Activated B cell treated with CpG ODN at 0.5 μM for 24 hours (primary cell): ENCODE measurements at regions of chr9 and their contacts with region 1.

Region 1: DNA sequence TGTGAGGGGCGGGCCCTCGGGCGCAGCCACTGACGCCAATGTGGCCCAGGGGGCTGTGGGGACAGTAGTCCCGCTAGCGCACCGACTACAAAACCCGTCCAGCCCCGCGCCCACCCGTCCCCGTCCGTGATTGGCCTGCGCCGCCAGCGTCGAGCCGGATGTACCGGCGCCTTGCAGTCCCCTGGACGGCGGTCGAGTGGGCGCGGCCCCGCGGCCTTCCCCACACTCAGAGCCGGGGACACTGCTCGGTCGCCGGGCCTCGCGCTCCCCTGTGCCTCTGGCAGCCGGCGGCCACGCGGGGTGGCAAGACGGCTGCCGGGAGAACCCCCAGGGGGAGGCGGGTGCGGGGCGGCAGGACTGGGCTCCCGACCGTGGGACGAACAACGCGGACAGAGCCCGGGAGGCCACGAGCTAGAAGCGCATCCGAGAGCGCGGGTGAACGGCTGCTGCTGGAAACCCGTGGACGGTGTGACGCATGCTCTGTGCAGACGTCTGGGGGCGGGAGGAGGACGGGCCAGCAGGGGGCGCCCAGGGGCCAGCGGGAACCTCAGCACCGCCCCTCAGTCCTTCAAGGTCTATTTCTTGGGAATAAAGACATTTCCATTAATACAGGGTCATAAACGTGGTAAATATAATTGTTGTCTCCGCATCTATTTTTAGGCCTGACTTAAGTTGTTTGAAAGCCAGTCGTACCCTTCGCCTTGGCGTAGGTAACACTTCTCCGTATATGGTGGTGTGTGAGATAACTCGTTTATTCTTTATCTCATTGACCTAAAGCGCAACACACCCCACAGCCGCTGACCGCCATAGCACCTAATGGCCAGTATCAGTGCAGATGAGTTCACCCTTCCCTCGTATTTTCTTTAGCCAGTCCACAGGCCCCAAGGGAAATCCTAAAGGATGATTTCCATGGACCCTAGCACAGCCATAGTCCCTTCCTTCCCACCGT is 629 bp upstream of the BICD2 start:
- DNase-seq: peak; percentile 97
- ATAC-seq: peak; percentile 91
- H3K4me3 Mint-ChIP-seq: peak overlapping the region; percentile 90
- H3K27ac Mint-ChIP-seq: peak overlapping the region; percentile 95
- H3K4me1 Mint-ChIP-seq: peaks cover 63% of the 10 kb centered on the region
- H3K27me3 Mint-ChIP-seq: no peaks in the 10 kb centered on the region
- CTCF ChIP-seq: peak; percentile 71

Region 2: GRCh38 chr9:92293452-92294296 is 471.6 kb before region 1 on chr9 and contains the start of gene IARS1:
- CTCF ChIA-PET with region 1: no interaction called
- POLR2A ChIA-PET with region 1: no interaction called
- intact Hi-C with region 1: loop called (anchors 1 kb)
- DNase-seq: peak; percentile 100
- ATAC-seq: peak; percentile 90
- H3K4me3 Mint-ChIP-seq: peak within 1 kb of the TSS; percentile 98
- H3K27ac Mint-ChIP-seq: peak within 1 kb of the TSS; percentile 98
- H3K4me1 Mint-ChIP-seq: peaks cover 76% of the 10 kb centered on the region
- H3K27me3 Mint-ChIP-seq: no peaks in the 10 kb centered on the region
- CTCF ChIP-seq: no peak
- total RNA-seq, gene IARS1: 176 and 205 TPM in 2 replicates

Region 3: GRCh38 chr9:92501671-92502393 is 263.4 kb before region 1 on chr9:
- CTCF ChIA-PET with region 1: no interaction called
- POLR2A ChIA-PET with region 1: no interaction called
- intact Hi-C with region 1: no loop called
- DNase-seq: no peak
- ATAC-seq: no peak
- H3K4me3 Mint-ChIP-seq: no peak overlapping the region
- H3K27ac Mint-ChIP-seq: no peak overlapping the region
- H3K4me1 Mint-ChIP-seq: no peaks in the 10 kb centered on the region
- H3K27me3 Mint-ChIP-seq: no peaks in the 10 kb centered on the region
- CTCF ChIP-seq: no peak

Region 4: GRCh38 chr9:92716557-92716956 is 48.7 kb before region 1 on chr9:
- CTCF ChIA-PET with region 1: interaction called, 7 read pairs
- POLR2A ChIA-PET with region 1: interaction called, 3 read pairs
- intact Hi-C with region 1: loop called (anchors 1 kb)
- DNase-seq: peak; percentile 76
- ATAC-seq: peak; percentile 75
- H3K4me3 Mint-ChIP-seq: no peak overlapping the region
- H3K27ac Mint-ChIP-seq: no peak overlapping the region
- H3K4me1 Mint-ChIP-seq: peaks cover 51% of the 10 kb centered on the region
- H3K27me3 Mint-ChIP-seq: no peaks in the 10 kb centered on the region
- CTCF ChIP-seq: peak; percentile 75

Region 5: GRCh38 chr9:92798358-92798757 is 33.1 kb after region 1 on chr9:
- CTCF ChIA-PET with region 1: no interaction called
- POLR2A ChIA-PET with region 1: no interaction called
- intact Hi-C with region 1: no loop called
- DNase-seq: no peak
- ATAC-seq: no peak
- H3K4me3 Mint-ChIP-seq: no peak overlapping the region
- H3K27ac Mint-ChIP-seq: no peak overlapping the region
- H3K4me1 Mint-ChIP-seq: no peaks in the 10 kb centered on the region
- H3K27me3 Mint-ChIP-seq: peaks cover 39% of the 10 kb centered on the region
- CTCF ChIP-seq: no peak

Region 6: DNA sequence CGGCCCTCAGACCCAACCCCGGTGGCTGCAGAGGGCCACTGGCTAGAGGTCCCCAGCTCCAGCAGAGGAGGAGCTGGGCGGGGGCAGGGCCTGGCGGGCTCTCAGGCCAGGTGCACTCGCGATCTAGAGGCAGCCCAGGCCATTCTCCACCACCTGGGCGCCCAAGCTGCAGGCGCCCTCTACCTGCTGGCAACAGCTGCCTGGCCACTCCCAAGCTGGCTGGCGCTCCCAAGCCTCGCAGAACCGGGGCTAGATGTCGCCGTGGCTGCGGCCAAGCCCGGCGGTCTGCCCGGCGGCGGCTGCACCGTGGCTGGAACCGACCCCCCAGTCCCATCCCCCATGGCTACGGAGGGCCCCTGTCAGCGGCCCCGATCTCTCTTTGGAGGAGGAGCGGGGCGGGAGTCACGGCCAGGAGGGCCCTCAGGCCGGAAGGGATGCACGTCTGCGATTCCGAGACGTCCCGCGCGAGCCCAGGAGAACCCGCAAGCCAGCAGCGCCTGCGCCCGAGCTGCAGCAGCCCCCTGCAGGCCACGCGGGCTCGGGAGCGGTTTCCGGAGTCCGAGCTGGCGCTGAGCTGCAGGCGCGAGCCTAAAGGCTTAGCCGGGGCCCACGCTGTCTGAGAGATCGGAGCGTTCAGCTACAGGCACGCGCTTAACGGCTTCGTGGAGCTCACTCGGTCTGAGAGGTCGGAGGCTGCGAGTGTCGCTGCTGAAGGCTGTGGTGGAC is 43.6 kb after region 1 on chr9:
- CTCF ChIA-PET with region 1: no interaction called
- POLR2A ChIA-PET with region 1: interaction called, 9 read pairs
- intact Hi-C with region 1: loop called (anchors 1 kb)
- DNase-seq: peak; percentile 62
- ATAC-seq: peak; percentile 72
- H3K4me3 Mint-ChIP-seq: peak overlapping the region; percentile 84
- H3K27ac Mint-ChIP-seq: peak overlapping the region; percentile 37
- H3K4me1 Mint-ChIP-seq: peaks cover 18% of the 10 kb centered on the region
- H3K27me3 Mint-ChIP-seq: peaks cover 39% of the 10 kb centered on the region
- CTCF ChIP-seq: no peak

Region 7: GRCh38 chr9:93095205-93096130 is 330.2 kb after region 1 on chr9:
- CTCF ChIA-PET with region 1: no interaction called
- POLR2A ChIA-PET with region 1: no interaction called
- intact Hi-C with region 1: loop called (anchors 1 kb)
- DNase-seq: peak; percentile 100
- ATAC-seq: peak; percentile 79
- H3K4me3 Mint-ChIP-seq: peak overlapping the region; percentile 86
- H3K27ac Mint-ChIP-seq: peak overlapping the region; percentile 99
- H3K4me1 Mint-ChIP-seq: peaks cover 83% of the 10 kb centered on the region
- H3K27me3 Mint-ChIP-seq: no peaks in the 10 kb centered on the region
- CTCF ChIP-seq: no peak